HepG2 (cell line): ENCODE measurements at regions of chr12 and their contacts with region 1.

Region 1: DNA sequence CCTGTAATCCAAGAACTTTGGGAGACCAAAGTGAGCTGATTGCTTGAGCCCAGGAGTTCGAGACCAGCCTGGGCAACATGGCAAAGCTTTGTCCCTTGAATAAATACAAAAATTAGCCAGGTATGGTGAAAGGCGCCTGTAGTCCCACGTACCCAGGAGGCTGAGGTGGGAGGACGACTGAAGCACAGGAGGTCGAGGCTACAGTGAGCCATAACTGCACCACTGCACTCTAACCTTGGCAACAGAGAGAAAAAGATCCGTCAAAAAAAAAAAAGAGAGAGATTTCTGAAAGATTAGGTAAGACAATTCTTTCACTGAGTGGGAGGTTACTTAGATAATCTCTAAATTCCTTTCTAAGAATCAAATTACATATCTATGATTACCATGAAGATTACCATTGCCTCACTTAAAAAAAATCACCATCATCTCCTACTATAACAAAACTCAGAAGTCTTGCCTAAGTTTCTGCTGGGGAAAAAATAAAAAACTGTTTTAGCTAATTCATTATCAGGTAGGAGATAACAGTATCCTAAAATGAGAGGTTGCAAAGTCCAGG is 366.7 kb downstream of the DUSP6 start:
- DNase-seq: no peak
- ATAC-seq: no peak
- H3K4me3 ChIP-seq: no peak overlapping the region
- H3K27ac ChIP-seq: no peak overlapping the region
- H3K4me1 ChIP-seq: no peaks in the 10 kb centered on the region
- H3K27me3 ChIP-seq: no peaks in the 10 kb centered on the region; a peak in 1 of 5 replicates
- CTCF ChIP-seq: no peak
- EP300 ChIP-seq: no peak
- POLR2A ChIP-seq: no peak
- RAD21 ChIP-seq: no peak

Region 2: DNA sequence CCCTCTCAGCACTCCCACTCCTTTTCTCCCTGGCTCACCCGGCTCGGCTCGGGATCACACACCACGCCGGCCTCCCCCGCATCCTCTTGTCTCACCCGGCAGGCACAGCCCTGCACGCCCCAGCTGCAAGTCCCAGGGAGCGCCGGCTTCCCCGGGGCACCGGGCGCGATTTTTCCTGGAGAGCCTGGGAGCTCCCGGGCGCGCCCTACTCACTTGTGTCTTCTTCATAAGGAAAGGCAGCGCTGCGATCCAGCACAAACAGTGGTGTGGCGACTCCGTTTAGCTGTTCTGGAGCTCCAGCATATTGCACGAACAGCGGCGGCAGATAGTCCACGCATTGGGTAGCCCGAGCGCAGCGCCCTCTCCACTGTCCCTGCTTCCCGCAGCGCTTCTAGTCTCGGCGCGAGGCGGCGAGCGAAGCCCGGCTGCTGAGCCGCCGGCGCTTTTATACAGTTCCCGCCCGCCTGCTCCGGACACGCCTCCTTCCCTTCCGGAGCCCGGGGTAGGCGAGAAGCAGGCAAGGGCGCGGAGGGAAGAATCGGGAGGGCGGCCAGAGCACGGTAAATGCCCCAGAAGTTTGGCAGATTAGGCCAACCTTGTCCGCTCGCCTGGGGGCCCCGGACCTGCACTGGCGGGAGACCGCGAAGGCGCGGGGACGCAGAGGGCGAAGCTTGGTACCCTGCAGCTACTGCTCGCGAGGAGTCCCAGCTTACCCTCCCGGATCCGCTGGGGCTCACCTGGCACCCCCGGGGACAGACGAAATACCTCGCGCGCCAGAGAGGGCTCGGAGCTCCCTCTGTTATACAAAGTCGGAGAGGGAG is 405.3 kb before region 1 on chr12 and contains the start of gene KITLG:
- CTCF ChIA-PET with region 1: no interaction called
- POLR2A ChIA-PET with region 1: no interaction called
- in situ Hi-C with region 1: no loop called
- intact Hi-C with region 1: no loop called
- DNase-seq: peak; percentile 56
- ATAC-seq: peak; percentile 96
- H3K4me3 ChIP-seq: peak within 1 kb of the TSS; percentile 68 to 74 (median 72)
- H3K27ac ChIP-seq: no peak within 1 kb of the TSS
- H3K4me1 ChIP-seq: peaks cover 23% of the 10 kb centered on the region
- H3K27me3 ChIP-seq: no peaks in the 10 kb centered on the region
- CTCF ChIP-seq: peak; percentile 59
- EP300 ChIP-seq: no peak
- POLR2A ChIP-seq: peak; percentile 26 to 79; a peak in 2 of 4 replicates
- RAD21 ChIP-seq: peak; percentile 23; the same call in 1 of the 2 replicates
- total RNA-seq, gene KITLG: 4.3 and 5.3 TPM in 2 replicates

Region 3: GRCh38 chr12:88638966-88639760 is 346.4 kb before region 1 on chr12:
- CTCF ChIA-PET with region 1: no interaction called
- POLR2A ChIA-PET with region 1: no interaction called
- in situ Hi-C with region 1: loop called (anchors 10 kb)
- intact Hi-C with region 1: no loop called
- DNase-seq: no peak
- ATAC-seq: no peak
- H3K4me3 ChIP-seq: no peak overlapping the region
- H3K27ac ChIP-seq: no peak overlapping the region
- H3K4me1 ChIP-seq: no peaks in the 10 kb centered on the region
- H3K27me3 ChIP-seq: no peaks in the 10 kb centered on the region
- CTCF ChIP-seq: no peak
- EP300 ChIP-seq: no peak
- POLR2A ChIP-seq: no peak
- RAD21 ChIP-seq: no peak